Psoas muscle (tissue), 8 donors: ENCODE measurements at regions of chr12 and their contacts with region 1.

Region 1: GRCh38 chr12:122593910-122594309 is 66.9 kb downstream of the KNTC1 start:
- DNase-seq: no peak
- ATAC-seq: no peak
- H3K4me3 ChIP-seq: no peak overlapping the region
- H3K27ac ChIP-seq: no peak overlapping the region
- H3K4me1 ChIP-seq: no peaks in the 10 kb centered on the region
- H3K27me3 ChIP-seq: no peaks in the 10 kb centered on the region
- CTCF ChIP-seq: no peak

Region 2: GRCh38 chr12:122395319-122395718 is 198.6 kb before region 1 on chr12:
- intact Hi-C with region 1: no loop called
- DNase-seq: no peak
- ATAC-seq: no peak
- H3K4me3 ChIP-seq: peak overlapping the region; percentile 71
- H3K27ac ChIP-seq: peak overlapping the region; percentile 94
- H3K4me1 ChIP-seq: peaks cover 25% of the 10 kb centered on the region
- H3K27me3 ChIP-seq: no peaks in the 10 kb centered on the region
- CTCF ChIP-seq: no peak

Region 3: GRCh38 chr12:123761841-123762714 is 1168.2 kb after region 1 on chr12 and contains the start of gene DNAH10:
- intact Hi-C with region 1: loop called in 1 of 2 experiments (anchors 10 kb)
- DNase-seq: no peak
- ATAC-seq: no peak
- H3K4me3 ChIP-seq: peak within 1 kb of the TSS; percentile 40
- H3K27ac ChIP-seq: no peak within 1 kb of the TSS
- H3K4me1 ChIP-seq: no peaks in the 10 kb centered on the region
- H3K27me3 ChIP-seq: peaks cover 0 to 27% (median 6%) of the 10 kb centered on the region in 3 donors
- CTCF ChIP-seq: no peak
- total RNA-seq, gene DNAH10: 0.04 to 0.84 (median 0.59) TPM in 3 of 4 donors, not detected in the other